Endothelial cell of umbilical vein (primary cell): ENCODE measurements at regions of chr3 and their contacts with region 1.

Region 1: DNA sequence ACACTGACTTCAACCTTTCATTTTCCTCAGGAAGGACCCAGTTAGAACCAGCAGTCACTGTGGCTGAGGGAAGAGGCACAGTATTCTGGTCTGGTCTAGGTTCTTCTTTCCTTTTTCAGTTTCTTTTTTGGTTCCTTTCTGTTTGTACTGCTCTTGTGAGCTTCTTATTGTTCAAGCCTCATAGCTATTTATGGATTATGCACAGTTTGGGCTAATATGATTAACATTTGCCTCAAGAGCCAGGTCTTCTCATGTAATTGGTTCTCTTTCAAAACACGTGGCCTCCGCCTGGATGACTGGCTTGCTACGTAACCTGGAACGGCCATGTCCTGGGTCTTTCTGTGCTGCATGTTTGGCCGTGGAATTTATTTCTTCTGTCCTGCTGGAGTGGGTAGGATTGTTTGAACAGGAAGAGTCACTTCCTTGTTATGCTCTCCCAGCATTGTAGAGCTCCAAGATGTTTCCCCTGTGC is 43.3 kb downstream of the RBMS3 start:
- DNase-seq: peak; percentile 98
- H3K4me3 ChIP-seq: peak overlapping the region in 2 of 3 experiments; percentile 22 to 49
- H3K27ac ChIP-seq: peak overlapping the region; percentile 98
- H3K4me1 ChIP-seq: peaks cover 22% of the 10 kb centered on the region
- H3K27me3 ChIP-seq: no peaks in the 10 kb centered on the region
- CTCF ChIP-seq: no peak
- POLR2A ChIP-seq: peak; percentile 69

Region 2: GRCh38 chr3:29335438-29335837 is 11.2 kb after region 1 on chr3:
- CTCF ChIA-PET with region 1: interaction called, 7 read pairs
- POLR2A ChIA-PET with region 1: interaction called, 9 read pairs
- dilution Hi-C with region 1: no loop called
- intact Hi-C with region 1: loop called (anchors 1 kb)
- DNase-seq: peak; percentile 92
- H3K4me3 ChIP-seq: peak overlapping the region in 2 of 3 experiments; percentile 19 to 42
- H3K27ac ChIP-seq: peak overlapping the region; percentile 76
- H3K4me1 ChIP-seq: peaks cover 40% of the 10 kb centered on the region
- H3K27me3 ChIP-seq: no peaks in the 10 kb centered on the region
- CTCF ChIP-seq: no peak
- POLR2A ChIP-seq: no peak

Region 3: GRCh38 chr3:29515451-29515850 is 191.2 kb after region 1 on chr3:
- CTCF ChIA-PET with region 1: no interaction called
- POLR2A ChIA-PET with region 1: no interaction called
- dilution Hi-C with region 1: no loop called
- intact Hi-C with region 1: loop called (anchors 1 kb)
- DNase-seq: peak; percentile 70
- H3K4me3 ChIP-seq: no peak overlapping the region
- H3K27ac ChIP-seq: peak overlapping the region; percentile 69
- H3K4me1 ChIP-seq: peaks cover 40% of the 10 kb centered on the region
- H3K27me3 ChIP-seq: no peaks in the 10 kb centered on the region
- CTCF ChIP-seq: no peak
- POLR2A ChIP-seq: no peak

Region 4: GRCh38 chr3:29525254-29525881 is 201.2 kb after region 1 on chr3:
- CTCF ChIA-PET with region 1: interaction called, 3 read pairs
- POLR2A ChIA-PET with region 1: no interaction called
- dilution Hi-C with region 1: no loop called
- intact Hi-C with region 1: loop called (anchors 1 kb)
- DNase-seq: peak; percentile 93
- H3K4me3 ChIP-seq: no peak overlapping the region
- H3K27ac ChIP-seq: peak overlapping the region; percentile 64
- H3K4me1 ChIP-seq: peaks cover 25% of the 10 kb centered on the region
- H3K27me3 ChIP-seq: no peaks in the 10 kb centered on the region
- CTCF ChIP-seq: no peak
- POLR2A ChIP-seq: peak; percentile 48

Region 5: GRCh38 chr3:29764603-29765254 is 440.5 kb after region 1 on chr3:
- CTCF ChIA-PET with region 1: no interaction called
- POLR2A ChIA-PET with region 1: no interaction called
- dilution Hi-C with region 1: no loop called
- intact Hi-C with region 1: loop called (anchors 1 kb)
- DNase-seq: peak; percentile 83
- H3K4me3 ChIP-seq: no peak overlapping the region
- H3K27ac ChIP-seq: no peak overlapping the region
- H3K4me1 ChIP-seq: peaks cover 14% of the 10 kb centered on the region
- H3K27me3 ChIP-seq: no peaks in the 10 kb centered on the region
- CTCF ChIP-seq: peak; percentile 36 to 47
- POLR2A ChIP-seq: no peak